ENCODE measurements at regions of chr3 and their contacts with region 1.

Region 1: DNA sequence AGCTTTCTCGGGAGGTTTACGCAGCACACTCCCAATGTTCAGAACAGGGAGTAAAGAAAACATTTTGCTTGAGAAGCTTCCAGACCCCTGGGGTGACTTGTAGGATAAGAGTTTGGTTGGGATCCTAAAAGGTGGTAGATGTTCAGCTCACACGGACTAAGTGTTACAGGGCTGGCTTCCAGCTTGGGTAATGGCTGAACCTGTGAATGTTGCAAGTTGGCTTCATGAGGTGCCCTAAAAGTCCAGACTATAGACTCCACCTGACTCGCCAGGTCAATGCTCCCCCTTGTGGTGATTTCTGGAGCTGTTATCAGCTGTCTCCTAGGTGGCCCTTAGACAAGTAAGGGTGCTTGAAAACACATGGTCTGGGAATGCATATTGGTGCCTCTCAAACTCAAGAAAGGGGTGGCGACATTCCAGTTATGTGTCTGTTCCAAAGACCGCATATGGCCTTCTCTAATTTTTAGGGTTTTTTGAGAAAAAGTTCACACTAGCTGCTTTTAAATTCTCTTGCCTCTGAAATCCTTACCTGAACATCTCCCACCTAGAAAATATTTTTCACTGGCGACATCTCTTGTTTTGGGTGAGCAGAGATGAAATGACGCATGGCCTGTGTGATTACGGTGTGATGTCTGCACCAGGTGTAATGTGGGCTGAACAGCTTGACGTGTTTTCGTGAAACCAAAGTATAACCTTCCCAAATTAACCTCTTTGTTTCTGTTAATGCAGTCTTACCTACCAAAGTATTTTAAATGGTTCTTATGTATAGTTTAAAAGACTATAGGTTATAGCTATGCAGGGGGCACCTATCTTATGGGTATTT is 175.7 kb upstream of the KBTBD8 start:
- DNase-seq: peak; percentile 56
- CTCF ChIP-seq: peak; percentile 75

Region 2: GRCh38 chr3:66261355-66261754 is 561.0 kb before region 1 on chr3:
- CTCF ChIA-PET with region 1: interaction called, 130 read pairs
- POLR2A ChIA-PET with region 1: no interaction called
- DNase-seq: no peak
- CTCF ChIP-seq: no peak

Region 3: DNA sequence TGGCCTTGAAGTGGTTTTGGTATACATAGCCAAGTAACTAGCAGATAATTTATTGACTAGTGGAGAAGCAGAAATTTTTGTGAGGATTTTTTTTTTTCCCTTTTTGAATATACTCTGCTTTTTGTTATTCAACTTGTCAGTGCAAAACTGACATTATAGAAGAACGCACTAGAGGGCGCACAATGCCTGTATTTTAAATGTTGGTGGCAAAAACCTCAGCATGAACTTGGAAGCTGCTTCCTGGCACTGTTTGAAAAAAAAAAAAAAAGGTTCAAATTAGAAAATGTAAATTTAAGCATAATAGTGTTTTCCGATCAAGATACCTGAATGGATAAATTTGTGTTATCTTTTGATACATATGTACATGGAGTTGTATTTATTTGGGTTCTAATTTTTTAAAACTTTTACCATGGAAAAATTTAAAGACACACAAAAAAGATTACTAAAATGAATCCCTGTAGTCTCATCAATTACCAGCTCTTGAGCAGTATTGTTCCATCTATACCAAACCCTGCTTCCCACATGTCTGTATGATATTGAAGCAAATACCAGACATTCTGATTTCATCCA is 545.6 kb before region 1 on chr3:
- CTCF ChIA-PET with region 1: interaction called, 26 read pairs
- POLR2A ChIA-PET with region 1: no interaction called
- DNase-seq: no peak
- CTCF ChIP-seq: peak; percentile 68

Region 4: DNA sequence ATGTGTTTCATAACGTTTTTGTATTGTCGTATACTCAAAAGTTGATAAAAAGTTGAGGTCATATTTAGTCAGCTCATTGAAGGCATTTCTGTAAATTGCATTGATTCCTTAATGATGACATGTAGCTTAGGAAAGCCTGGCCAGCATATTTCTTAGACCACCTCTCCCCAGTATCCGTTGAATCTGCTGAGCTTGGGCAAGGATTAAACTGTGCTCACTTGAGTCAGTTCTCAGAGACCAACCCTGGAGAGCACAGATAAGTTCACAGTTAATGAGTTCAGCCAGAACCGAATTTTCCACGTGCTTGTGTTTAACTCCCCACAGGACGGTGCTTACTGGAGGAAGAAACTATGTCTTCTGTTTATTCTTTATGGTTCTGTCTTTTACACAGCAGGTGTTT is 468.9 kb before region 1 on chr3:
- CTCF ChIA-PET with region 1: interaction called, 11 read pairs
- POLR2A ChIA-PET with region 1: no interaction called
- DNase-seq: no peak
- CTCF ChIP-seq: no peak

Region 5: GRCh38 chr3:66729639-66730393 is 92.6 kb before region 1 on chr3:
- CTCF ChIA-PET with region 1: no interaction called
- POLR2A ChIA-PET with region 1: no interaction called
- DNase-seq: no peak
- CTCF ChIP-seq: no peak

Region 6: DNA sequence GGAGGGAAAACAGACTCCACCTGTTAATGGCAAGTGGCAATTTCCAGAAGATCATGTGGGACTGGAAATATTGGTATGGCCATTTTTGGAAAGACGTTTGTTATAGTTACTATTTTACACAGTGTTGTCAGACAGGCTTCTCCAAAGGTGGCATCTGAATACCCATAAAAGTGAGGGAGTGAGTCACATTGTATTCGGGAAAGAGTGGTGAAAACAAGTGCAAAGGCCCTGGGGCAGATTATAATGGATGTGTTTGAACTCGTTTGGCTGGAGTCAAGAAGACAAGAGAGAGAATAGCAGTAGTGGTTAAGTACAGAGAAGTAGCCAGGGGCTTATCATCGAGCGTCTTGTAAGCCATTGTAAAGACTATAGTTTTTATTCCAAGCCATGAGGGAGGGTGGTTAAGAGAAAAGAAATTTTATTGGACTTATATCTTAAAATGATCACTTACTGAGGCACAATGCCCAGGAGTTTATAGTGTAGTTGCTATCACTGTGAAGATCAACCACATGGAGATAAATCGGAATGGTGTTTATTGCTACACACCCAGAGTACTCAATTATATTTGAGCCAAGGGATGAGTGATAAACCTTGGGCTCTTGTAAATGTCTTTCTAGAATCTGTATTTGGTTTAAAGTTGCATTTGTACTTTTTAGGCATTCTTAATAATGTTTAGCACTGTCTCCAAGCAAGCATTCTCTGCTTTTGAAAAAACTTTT is 37.0 kb before region 1 on chr3:
- CTCF ChIA-PET with region 1: no interaction called
- POLR2A ChIA-PET with region 1: no interaction called
- DNase-seq: no peak
- CTCF ChIP-seq: no peak

Region 7: GRCh38 chr3:66803206-66803605 is 19.2 kb before region 1 on chr3:
- CTCF ChIA-PET with region 1: interaction called, 27 read pairs
- POLR2A ChIA-PET with region 1: no interaction called
- DNase-seq: no peak
- CTCF ChIP-seq: no peak

Region 8: GRCh38 chr3:66809595-66809958 is 12.8 kb before region 1 on chr3:
- CTCF ChIA-PET with region 1: interaction called, 27 read pairs
- POLR2A ChIA-PET with region 1: no interaction called
- DNase-seq: no peak
- CTCF ChIP-seq: no peak

Region 9: GRCh38 chr3:67384760-67385397 is 562.5 kb after region 1 on chr3:
- CTCF ChIA-PET with region 1: no interaction called
- POLR2A ChIA-PET with region 1: no interaction called
- DNase-seq: peak; percentile 22
- CTCF ChIP-seq: peak; percentile 53

Region 10: GRCh38 chr3:67433109-67433508 is 610.7 kb after region 1 on chr3:
- CTCF ChIA-PET with region 1: no interaction called
- POLR2A ChIA-PET with region 1: no interaction called
- DNase-seq: no peak
- CTCF ChIP-seq: no peak